T-cell (primary cell): ENCODE measurements at regions of chr16 and their contacts with region 1.

Region 1: GRCh38 chr16:76941113-76941512 is 249.9 kb upstream of the MON1B start:
- DNase-seq: no peak
- ATAC-seq: no peak
- H3K4me3 ChIP-seq: no peak overlapping the region
- H3K4me3 Mint-ChIP-seq: no peak overlapping the region
- H3K27ac ChIP-seq: no peak overlapping the region
- H3K27ac Mint-ChIP-seq: no peak overlapping the region
- H3K4me1 ChIP-seq: no peaks in the 10 kb centered on the region
- H3K4me1 Mint-ChIP-seq: no peaks in the 10 kb centered on the region
- H3K27me3 ChIP-seq: no peaks in the 10 kb centered on the region
- H3K27me3 Mint-ChIP-seq: no peaks in the 10 kb centered on the region

Region 2: GRCh38 chr16:76683051-76683450 is 258.1 kb before region 1 on chr16:
- CTCF ChIA-PET with region 1: interaction called in 1 of 2 experiments, 11 read pairs
- POLR2A ChIA-PET with region 1: no interaction called
- DNase-seq: no peak
- ATAC-seq: no peak
- H3K4me3 ChIP-seq: no peak overlapping the region
- H3K4me3 Mint-ChIP-seq: no peak overlapping the region
- H3K27ac ChIP-seq: no peak overlapping the region
- H3K27ac Mint-ChIP-seq: no peak overlapping the region
- H3K4me1 ChIP-seq: no peaks in the 10 kb centered on the region
- H3K4me1 Mint-ChIP-seq: no peaks in the 10 kb centered on the region
- H3K27me3 ChIP-seq: no peaks in the 10 kb centered on the region
- H3K27me3 Mint-ChIP-seq: no peaks in the 10 kb centered on the region

Region 3: DNA sequence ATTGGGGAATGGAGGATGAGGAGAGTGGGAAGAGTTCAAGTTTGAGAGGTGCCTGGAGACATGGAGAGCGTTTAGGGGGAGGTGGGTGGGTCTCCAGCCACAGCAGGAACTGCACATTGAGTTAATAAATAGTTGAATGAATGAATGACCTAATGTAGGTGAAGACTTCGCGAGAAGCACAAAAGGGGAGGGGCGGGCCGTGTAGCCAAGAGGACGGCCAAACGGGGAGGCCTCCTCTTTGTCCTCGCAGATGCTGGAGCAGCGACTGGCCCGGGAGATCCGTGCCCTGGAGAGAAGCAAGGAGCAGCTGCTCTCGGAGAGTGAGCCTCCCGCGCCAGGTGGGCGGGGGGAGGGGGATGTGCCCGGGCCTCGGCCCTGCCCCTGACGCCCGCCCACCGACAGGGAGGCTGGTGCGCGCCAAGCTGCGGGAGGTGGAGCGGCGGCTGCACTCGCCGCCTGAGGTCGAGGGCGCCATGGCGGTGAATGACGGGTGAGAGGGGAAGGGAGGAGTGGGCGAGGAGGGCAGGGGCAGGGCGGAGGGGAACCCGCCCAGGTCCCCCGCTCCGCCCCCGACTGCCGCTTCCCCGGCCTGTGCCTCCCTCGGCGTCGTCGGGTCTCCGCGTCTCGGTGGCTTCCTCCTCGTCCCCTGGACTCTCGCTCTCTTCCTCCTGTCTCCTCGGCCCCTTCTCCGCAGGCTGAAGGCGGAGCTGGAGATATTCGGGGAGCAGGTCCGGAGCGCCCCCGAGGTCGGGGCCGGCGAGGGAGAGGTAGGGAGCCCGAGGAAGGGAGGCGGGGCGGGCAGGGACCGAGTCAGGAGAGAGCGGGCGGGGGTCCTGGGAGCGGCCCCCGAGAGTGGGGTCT is 271.0 kb after region 1 on chr16:
- CTCF ChIA-PET with region 1: no interaction called
- POLR2A ChIA-PET with region 1: no interaction called
- DNase-seq: peak; percentile 38 to 85 (median 72)
- ATAC-seq: peak; percentile 79 to 87 (median 80)
- H3K4me3 ChIP-seq: peak overlapping the region; percentile 71 to 81
- H3K4me3 Mint-ChIP-seq: peak overlapping the region; percentile 82 to 87 (median 86)
- H3K27ac ChIP-seq: peak overlapping the region; percentile 65
- H3K27ac Mint-ChIP-seq: peak overlapping the region; percentile 63 to 81
- H3K4me1 ChIP-seq: peaks cover 0 to 12% of the 10 kb centered on the region in 2 experiments
- H3K4me1 Mint-ChIP-seq: peaks cover 15 to 16% (median 15%) of the 10 kb centered on the region in 3 donors
- H3K27me3 ChIP-seq: no peaks in the 10 kb centered on the region
- H3K27me3 Mint-ChIP-seq: no peaks in the 10 kb centered on the region